ENCODE measurements at regions of chr11 and their contacts with region 1.

Region 1: DNA sequence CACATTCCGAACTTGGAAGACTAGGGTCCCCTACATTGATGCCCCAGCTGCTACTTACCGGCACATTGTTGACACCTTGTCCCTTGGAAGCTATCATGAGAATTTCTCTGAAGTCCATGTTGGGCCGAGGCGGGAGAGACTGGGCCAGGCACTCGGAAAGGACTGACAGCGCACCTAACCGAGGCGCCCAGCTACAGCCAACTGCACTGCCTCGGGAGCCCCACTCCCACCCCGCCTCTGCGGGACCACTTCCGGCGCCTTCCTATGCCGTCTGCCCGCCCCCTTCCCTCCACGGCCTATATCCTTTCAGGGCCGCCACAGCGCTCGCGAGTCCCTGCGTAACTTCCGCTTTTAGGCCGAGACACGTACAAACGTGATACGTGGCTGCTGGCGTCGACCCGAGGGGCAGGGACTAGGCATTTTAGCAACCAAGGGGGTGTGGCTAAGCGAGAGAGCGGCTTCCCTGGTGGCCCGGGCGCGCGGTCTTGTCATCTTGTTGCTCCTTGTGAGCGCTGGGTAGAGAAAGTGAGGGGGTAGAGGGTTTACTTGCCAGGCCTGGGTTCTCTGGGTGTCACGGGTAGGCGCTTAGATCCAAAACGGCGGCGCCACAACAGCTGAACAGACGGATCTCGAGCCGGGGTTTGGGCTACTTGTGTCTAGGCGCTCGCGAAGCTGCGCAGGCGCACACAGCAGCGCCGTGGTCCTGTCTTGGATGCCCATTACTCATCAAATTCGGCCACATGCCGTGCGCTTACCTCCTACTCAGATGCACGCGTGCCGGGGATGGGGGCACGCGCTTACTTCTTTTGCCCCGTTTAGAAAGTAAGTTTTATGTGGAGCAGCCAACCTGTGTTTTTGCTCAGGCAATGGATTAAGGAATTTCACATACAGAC is at the start of gene SPTY2D1:
- DNase-seq: peak; percentile 97
- H3K4me3 Mint-ChIP-seq: peak within 1 kb of the TSS; percentile 97
- H3K27ac Mint-ChIP-seq: peak within 1 kb of the TSS; percentile 99
- H3K4me1 Mint-ChIP-seq: peaks cover 32% of the 10 kb centered on the region
- H3K27me3 Mint-ChIP-seq: no peaks in the 10 kb centered on the region
- total RNA-seq, gene SPTY2D1: 29.2 and 29.6 TPM in 2 replicates

Region 2: GRCh38 chr11:17354601-17354991 is 1279.8 kb before region 1 on chr11:
- intact Hi-C with region 1: loop called (anchors 5 kb)
- DNase-seq: peak; percentile 56
- H3K4me3 Mint-ChIP-seq: peak overlapping the region; percentile 73
- H3K27ac Mint-ChIP-seq: peak overlapping the region; percentile 73
- H3K4me1 Mint-ChIP-seq: peaks cover 40% of the 10 kb centered on the region
- H3K27me3 Mint-ChIP-seq: peaks cover 43% of the 10 kb centered on the region

Region 3: DNA sequence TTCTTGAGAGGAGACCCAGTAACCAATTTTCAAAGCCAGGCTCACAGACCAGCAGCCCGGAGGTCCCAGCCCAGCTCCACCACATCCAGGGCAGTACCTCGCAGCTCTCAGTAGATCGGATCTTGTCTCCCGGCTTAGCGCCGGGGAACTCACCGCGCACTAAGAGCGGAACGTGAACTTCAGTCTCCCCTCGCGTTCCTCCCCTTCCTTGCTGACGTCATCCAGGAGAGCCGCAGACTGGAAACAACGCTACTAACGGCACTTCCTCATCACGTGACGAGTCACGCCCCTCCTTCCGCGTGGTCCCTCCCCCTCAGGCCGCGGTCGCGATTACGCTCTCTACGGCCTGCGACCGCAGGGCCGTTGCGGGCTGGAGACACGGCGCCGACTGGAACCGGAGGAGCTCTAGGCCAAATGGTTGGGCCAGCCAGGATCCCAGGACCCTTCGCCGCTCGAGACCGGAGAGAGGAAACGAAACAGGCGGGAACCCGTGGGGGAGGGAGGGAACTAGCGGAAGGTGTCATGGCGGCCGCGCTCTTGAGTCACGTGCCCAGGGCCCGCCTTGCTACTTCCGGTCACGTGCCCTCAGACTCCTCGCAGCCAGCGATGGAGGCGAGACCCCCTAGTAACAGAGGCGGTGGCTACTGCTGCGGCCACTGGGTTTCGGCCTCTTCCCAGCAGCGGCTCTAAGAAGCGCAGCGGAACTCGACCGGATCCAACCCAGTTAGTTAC is 312.2 kb before region 1 on chr11 and contains the starts of genes GTF2H1 and HPS5:
- intact Hi-C with region 1: loop called (anchors 1 kb)
- DNase-seq: peak; percentile 95
- H3K4me3 Mint-ChIP-seq: peak within 1 kb of the TSS; percentile 93
- H3K27ac Mint-ChIP-seq: peak within 1 kb of the TSS; percentile 99
- H3K4me1 Mint-ChIP-seq: peaks cover 70% of the 10 kb centered on the region
- H3K27me3 Mint-ChIP-seq: no peaks in the 10 kb centered on the region
- total RNA-seq, gene GTF2H1: 52.2 and 56.9 TPM in 2 replicates
- total RNA-seq, gene HPS5: 19.9 and 21.4 TPM in 2 replicates

Region 4: DNA sequence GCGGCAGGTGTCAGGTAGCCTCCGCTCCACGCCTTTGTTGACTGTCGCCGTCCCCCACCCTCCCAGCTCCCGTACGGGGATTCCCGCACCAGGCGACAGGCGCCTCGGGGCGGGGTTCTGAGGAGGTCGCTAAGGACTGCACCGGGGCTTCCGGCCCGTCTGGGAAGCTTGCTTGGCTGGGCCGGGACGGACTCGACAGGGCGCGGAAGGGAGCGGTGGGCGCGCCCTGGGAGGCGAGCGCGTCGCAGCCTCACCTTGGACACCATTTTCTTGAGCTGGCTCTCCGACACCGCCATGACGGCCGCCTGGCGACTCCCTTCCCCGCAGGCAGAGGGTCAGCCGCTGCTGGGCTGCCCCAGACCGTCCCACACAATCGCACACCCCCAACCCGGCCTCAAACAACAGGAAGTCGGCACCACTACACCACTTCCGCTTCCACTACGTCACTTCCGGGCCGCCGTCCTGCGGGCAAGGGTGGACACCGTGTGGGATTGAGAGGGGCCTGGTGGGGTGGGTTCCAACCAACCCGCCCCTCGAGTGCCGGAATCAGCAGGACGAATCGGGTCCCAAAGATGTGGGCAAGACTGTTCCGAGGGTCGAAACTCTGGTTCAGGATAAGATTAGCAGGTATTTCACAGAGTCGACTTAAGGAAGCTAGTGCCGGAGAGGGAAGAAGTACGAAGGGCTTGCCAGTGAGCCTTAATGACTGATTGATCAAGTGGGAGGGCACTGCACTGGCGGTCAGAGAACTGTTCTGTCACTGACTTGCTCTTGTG is 107.7 kb before region 1 on chr11 and contains the start of gene TSG101:
- intact Hi-C with region 1: loop called (anchors 1 kb)
- DNase-seq: peak; percentile 92
- H3K4me3 Mint-ChIP-seq: peak within 1 kb of the TSS; percentile 97
- H3K27ac Mint-ChIP-seq: peak within 1 kb of the TSS; percentile 100
- H3K4me1 Mint-ChIP-seq: peaks cover 36% of the 10 kb centered on the region
- H3K27me3 Mint-ChIP-seq: peaks cover 4% of the 10 kb centered on the region
- total RNA-seq, gene TSG101: 41.8 and 49.7 TPM in 2 replicates

Region 5: GRCh38 chr11:18588297-18589252 is 45.8 kb before region 1 on chr11 and contains the start of gene UEVLD:
- intact Hi-C with region 1: loop called (anchors 1 kb)
- DNase-seq: peak; percentile 68
- H3K4me3 Mint-ChIP-seq: no peak within 1 kb of the TSS
- H3K27ac Mint-ChIP-seq: no peak within 1 kb of the TSS
- H3K4me1 Mint-ChIP-seq: peaks cover 11% of the 10 kb centered on the region
- H3K27me3 Mint-ChIP-seq: no peaks in the 10 kb centered on the region
- total RNA-seq, gene UEVLD: 31.2 and 31.4 TPM in 2 replicates

Region 6: GRCh38 chr11:18669220-18669598 is 34.8 kb after region 1 on chr11:
- intact Hi-C with region 1: loop called (anchors 1 kb)
- DNase-seq: no peak
- H3K4me3 Mint-ChIP-seq: no peak overlapping the region
- H3K27ac Mint-ChIP-seq: no peak overlapping the region
- H3K4me1 Mint-ChIP-seq: peaks cover 31% of the 10 kb centered on the region
- H3K27me3 Mint-ChIP-seq: peaks cover 7% of the 10 kb centered on the region

Region 7: DNA sequence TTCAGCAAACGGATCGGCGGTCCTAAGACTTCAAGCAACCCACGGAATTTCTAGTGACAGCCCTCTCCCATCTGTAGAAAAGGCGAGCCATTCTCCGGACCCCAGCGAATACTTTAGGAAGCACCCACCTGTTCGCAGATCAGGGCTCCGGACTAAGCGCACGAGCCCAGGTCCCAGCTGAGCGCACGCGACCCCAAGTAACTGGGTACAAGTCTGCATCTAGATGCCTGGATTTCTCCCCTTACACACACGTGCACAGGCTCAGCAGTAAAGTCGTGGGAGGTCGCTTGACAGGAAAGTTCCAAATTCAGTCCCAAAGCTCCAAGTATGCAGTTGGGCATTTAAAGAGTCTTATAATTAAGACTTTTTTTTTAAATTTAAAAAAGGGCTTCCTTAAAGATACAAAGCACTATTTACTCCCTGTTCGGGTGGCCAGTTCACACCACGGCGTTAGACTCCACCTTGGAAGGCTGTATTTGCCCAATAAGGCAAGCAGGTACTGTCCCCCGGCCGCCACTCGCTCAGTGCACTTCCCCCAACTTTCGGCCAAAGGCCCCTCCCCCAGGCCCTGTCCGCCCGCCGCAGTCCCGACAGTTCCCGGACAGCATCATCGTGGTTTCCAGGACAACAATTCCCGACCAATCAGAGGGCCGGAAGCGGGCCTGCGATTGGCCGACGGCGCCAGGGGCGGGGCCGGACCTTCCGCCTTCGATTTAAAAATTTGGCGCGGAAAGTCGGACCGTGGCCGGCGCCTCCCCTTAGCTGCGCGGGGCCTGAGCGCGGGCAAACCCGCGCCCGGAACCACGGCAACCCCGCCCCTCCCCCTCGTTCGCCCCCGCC is 606.3 kb after region 1 on chr11 and contains the start of gene E2F8:
- intact Hi-C with region 1: loop called (anchors 2 kb)
- DNase-seq: peak; percentile 92
- H3K4me3 Mint-ChIP-seq: peak within 1 kb of the TSS; percentile 96
- H3K27ac Mint-ChIP-seq: peak within 1 kb of the TSS; percentile 89
- H3K4me1 Mint-ChIP-seq: peaks cover 46% of the 10 kb centered on the region
- H3K27me3 Mint-ChIP-seq: peaks cover 15% of the 10 kb centered on the region
- total RNA-seq, gene E2F8: 25.6 and 28.2 TPM in 2 replicates

Region 8: DNA sequence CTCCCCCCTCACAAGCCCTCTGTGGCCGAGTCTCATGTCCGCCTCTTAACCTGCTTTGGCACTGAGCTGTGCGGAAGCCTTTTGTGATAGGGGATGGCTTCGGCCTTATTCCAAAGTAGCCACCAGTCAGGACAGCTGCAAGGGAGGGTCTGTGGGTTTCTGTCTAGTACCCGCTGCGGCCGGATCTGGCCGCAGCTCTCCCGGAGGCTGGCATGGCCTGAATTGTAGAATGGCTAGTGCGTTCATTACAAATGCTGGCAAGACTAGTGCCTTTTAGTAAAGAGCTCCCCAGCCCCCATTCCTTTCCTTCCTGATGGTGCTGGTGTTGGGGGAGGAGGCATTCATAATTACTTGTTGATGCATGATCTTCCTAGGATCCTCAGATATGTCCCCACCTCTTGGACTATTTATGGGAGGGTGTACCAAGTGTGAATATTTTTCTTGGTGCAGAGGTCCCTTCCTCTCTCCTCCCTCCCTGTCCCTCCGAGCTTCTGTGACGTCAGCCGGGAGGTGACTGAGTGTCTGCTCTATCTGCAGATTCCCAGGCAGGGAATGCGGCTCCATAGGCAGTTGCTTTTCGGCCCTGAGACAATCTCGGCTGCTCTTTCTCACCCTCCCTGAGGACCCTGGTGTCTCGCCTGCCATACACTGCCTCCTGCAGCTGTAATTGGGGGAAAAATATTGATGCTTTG is 715.1 kb after region 1 on chr11:
- intact Hi-C with region 1: no loop called
- DNase-seq: no peak
- H3K4me3 Mint-ChIP-seq: no peak overlapping the region
- H3K27ac Mint-ChIP-seq: no peak overlapping the region
- H3K4me1 Mint-ChIP-seq: peaks cover 6% of the 10 kb centered on the region
- H3K27me3 Mint-ChIP-seq: peaks cover 42% of the 10 kb centered on the region